CD8-positive, alpha-beta memory T cell (primary cell): ENCODE measurements at regions of chr22 and their contacts with region 1.

Region 1: DNA sequence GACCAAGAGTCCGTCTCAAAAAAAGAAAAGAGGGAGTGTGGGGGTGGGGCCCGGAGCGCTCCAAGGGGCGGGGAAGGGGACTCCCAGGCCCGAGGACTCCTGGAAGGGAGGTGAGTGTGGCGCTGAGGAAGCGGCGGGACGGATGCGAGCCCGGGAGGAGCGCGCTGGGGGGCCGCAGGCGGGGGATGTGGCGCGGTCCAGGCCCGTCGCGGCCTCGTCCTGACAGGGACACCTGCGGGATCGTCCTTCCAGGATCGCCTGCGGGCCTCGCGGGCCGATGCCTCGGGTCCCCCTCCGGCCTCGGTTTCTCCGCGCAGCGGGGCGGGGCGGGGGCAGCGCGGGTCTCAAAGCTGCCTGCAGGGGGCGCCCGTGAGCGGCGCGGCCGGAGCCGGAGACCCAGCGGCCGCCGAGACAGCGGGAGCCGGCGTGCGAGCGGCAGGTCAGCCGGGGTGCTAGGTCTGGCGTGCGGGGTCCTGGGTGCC is 3.8 kb upstream of the ADORA2A start:
- DNase-seq: peak; percentile 52 to 73 (median 58)
- H3K4me3 ChIP-seq: no peak overlapping the region
- H3K4me3 Mint-ChIP-seq: peak overlapping the region in 6 of 7 donors; percentile 71 to 90 (median 75)
- H3K27ac ChIP-seq: no peak overlapping the region
- H3K27ac Mint-ChIP-seq: peak overlapping the region in 1 of 8 donors; percentile 96
- H3K4me1 ChIP-seq: peaks cover 30% of the 10 kb centered on the region
- H3K4me1 Mint-ChIP-seq: peaks cover 29 to 51% (median 33%) of the 10 kb centered on the region in 3 donors
- H3K27me3 ChIP-seq: no peaks in the 10 kb centered on the region
- H3K27me3 Mint-ChIP-seq: peaks cover 0 to 3% of the 10 kb centered on the region in 2 donors

Region 2: DNA sequence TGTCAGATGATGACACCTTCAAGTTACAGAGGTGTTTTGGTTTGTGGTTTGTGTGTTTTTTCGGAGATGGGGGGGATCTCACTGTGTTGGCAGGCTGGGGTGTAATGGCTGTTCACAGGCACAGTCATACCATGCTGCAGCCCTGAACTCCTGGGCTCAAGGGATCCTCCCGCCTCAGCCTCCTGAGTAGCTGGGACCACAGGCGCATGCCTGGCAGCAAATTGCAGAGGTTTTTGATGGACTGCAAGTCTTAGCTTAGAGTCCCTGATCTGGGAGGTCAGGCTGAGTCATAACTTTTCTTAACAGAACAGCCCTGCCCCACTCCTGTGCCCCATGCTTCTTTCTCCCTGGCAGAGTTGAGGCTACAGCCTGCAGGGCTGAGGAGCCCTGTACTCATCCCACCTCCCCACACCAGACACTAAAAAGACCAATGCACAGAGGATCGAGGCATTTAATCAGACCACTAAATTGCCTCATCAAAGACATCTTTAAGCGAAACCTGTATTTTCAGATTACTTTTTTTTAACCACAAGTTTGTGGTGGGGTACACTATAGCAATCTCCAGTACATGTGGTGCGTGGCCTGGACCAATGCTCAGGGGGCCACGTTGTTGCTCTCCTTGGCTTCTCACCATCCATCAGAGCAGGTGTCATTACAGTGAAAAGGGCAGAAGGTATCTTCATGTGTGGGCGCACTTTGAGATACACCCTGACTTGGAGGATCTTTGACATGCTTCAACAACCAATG is 13.3 kb before region 1 on chr22:
- CTCF ChIA-PET with region 1: interaction called, 11 read pairs
- POLR2A ChIA-PET with region 1: no interaction called
- DNase-seq: peak in 3 of 5 donors; percentile 28 to 69 (median 58)
- H3K4me3 ChIP-seq: no peak overlapping the region
- H3K4me3 Mint-ChIP-seq: peak overlapping the region in 5 of 7 donors; percentile 52 to 77 (median 69)
- H3K27ac ChIP-seq: no peak overlapping the region
- H3K27ac Mint-ChIP-seq: peak overlapping the region; percentile 51 to 92 (median 70)
- H3K4me1 ChIP-seq: peaks cover 36% of the 10 kb centered on the region
- H3K4me1 Mint-ChIP-seq: peaks cover 40 to 48% (median 40%) of the 10 kb centered on the region in 3 donors
- H3K27me3 ChIP-seq: no peaks in the 10 kb centered on the region
- H3K27me3 Mint-ChIP-seq: no peaks in the 10 kb centered on the region

Region 3: GRCh38 chr22:24433813-24434470 is 10.4 kb after region 1 on chr22:
- CTCF ChIA-PET with region 1: interaction called, 67 read pairs
- POLR2A ChIA-PET with region 1: interaction called, 6 read pairs
- DNase-seq: peak in 1 of 5 donors; percentile 34
- H3K4me3 ChIP-seq: peak overlapping the region; percentile 38
- H3K4me3 Mint-ChIP-seq: peak overlapping the region; percentile 43 to 84 (median 67)
- H3K27ac ChIP-seq: peak overlapping the region; percentile 77
- H3K27ac Mint-ChIP-seq: peak overlapping the region; percentile 84 to 98 (median 92)
- H3K4me1 ChIP-seq: peaks cover 99% of the 10 kb centered on the region
- H3K4me1 Mint-ChIP-seq: peaks cover 61 to 94% (median 85%) of the 10 kb centered on the region in 3 donors
- H3K27me3 ChIP-seq: no peaks in the 10 kb centered on the region
- H3K27me3 Mint-ChIP-seq: no peaks in the 10 kb centered on the region

Region 4: DNA sequence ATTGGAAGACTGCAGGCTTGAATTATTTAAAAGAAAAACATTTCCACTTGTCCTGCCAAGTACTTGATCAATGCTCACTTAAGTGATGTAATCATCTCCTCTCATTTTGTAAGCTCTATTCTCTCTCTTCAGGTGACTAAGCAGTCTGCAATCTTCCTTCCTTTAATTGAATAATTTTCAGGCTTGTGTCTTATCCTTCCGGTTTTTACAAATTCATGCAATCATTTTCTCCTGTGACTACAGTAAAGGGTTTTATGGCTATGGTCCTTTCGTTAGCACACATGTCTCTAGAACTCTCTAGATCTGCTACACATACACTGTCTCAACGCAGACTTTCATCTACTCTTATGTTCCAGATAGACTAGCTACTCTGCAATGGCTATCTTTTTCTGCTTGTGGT is 59.0 kb after region 1 on chr22:
- CTCF ChIA-PET with region 1: interaction called, 16 read pairs
- POLR2A ChIA-PET with region 1: no interaction called
- DNase-seq: no peak
- H3K4me3 ChIP-seq: no peak overlapping the region
- H3K4me3 Mint-ChIP-seq: no peak overlapping the region
- H3K27ac ChIP-seq: no peak overlapping the region
- H3K27ac Mint-ChIP-seq: no peak overlapping the region
- H3K4me1 ChIP-seq: no peaks in the 10 kb centered on the region
- H3K4me1 Mint-ChIP-seq: peaks cover 7 to 14% (median 10%) of the 10 kb centered on the region in 3 donors
- H3K27me3 ChIP-seq: no peaks in the 10 kb centered on the region
- H3K27me3 Mint-ChIP-seq: peaks cover 0 to 2% of the 10 kb centered on the region in 2 donors

Region 5: DNA sequence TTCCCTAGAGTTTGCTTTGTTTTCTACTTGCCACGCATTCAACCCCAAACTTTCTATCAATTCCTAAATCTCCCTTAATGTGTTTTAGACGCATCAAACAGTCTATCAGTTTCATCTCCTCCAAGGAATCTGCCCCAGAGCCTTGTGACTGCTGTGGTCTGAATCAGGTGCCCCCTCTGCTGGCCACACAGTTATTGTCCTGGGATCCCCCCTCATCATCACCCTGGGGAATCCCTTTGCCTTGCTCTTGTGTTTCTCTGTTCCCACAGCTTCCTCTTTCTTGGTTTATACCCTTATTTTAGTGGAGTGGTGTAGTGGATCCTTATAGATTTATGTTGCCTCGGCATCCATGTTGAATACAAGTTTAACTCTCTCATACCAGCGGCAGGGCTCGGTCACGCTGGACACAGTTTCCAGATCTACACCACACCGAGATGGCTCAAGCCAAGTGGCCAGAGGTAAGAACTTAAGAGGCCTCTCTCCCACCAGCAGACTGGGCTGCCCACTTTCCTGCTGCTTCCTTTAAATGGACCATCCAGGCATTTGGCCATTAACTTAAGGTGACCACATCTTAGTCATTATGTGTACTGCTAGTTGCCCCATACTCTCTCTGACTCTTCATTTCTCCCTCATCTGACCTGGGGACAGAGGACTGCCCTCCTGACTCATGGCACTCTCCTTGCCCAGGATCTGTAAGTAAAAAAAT is 79.7 kb after region 1 on chr22:
- CTCF ChIA-PET with region 1: interaction called, 36 read pairs
- POLR2A ChIA-PET with region 1: interaction called, 3 read pairs
- DNase-seq: peak; percentile 39 to 69 (median 45)
- H3K4me3 ChIP-seq: no peak overlapping the region
- H3K4me3 Mint-ChIP-seq: no peak overlapping the region
- H3K27ac ChIP-seq: no peak overlapping the region
- H3K27ac Mint-ChIP-seq: peak overlapping the region in 1 of 8 donors; percentile 8
- H3K4me1 ChIP-seq: no peaks in the 10 kb centered on the region
- H3K4me1 Mint-ChIP-seq: peaks cover under 1 to 6% (median 2%) of the 10 kb centered on the region in 3 donors
- H3K27me3 ChIP-seq: no peaks in the 10 kb centered on the region
- H3K27me3 Mint-ChIP-seq: no peaks in the 10 kb centered on the region